ENCODE measurements at regions of chr13 and their contacts with region 1.

Region 1: GRCh38 chr13:99269627-99270241 is 11.6 kb upstream of the GPR18 start:
- DNase-seq: peak; percentile 55
- H3K4me3 ChIP-seq: no peak overlapping the region
- H3K27ac ChIP-seq: no peak overlapping the region
- H3K4me1 ChIP-seq: peaks cover 23% of the 10 kb centered on the region
- CTCF ChIP-seq: peak; percentile 80

Region 2: GRCh38 chr13:98842864-98843481 is 426.8 kb before region 1 on chr13:
- CTCF ChIA-PET with region 1: no interaction called
- POLR2A ChIA-PET with region 1: no interaction called
- intact Hi-C with region 1: loop called (anchors 10 kb)
- DNase-seq: peak; percentile 71
- H3K4me3 ChIP-seq: no peak overlapping the region
- H3K27ac ChIP-seq: no peak overlapping the region
- H3K4me1 ChIP-seq: peaks cover 2% of the 10 kb centered on the region
- CTCF ChIP-seq: peak; percentile 80

Region 3: GRCh38 chr13:99176309-99177276 is 93.1 kb before region 1 on chr13:
- CTCF ChIA-PET with region 1: interaction called, 18 read pairs
- POLR2A ChIA-PET with region 1: interaction called, 4 read pairs
- intact Hi-C with region 1: loop called (anchors 1 kb)
- DNase-seq: peak; percentile 76
- H3K4me3 ChIP-seq: peak overlapping the region; percentile 39
- H3K27ac ChIP-seq: no peak overlapping the region
- H3K4me1 ChIP-seq: peaks cover 30% of the 10 kb centered on the region
- CTCF ChIP-seq: peak; percentile 78

Region 4: DNA sequence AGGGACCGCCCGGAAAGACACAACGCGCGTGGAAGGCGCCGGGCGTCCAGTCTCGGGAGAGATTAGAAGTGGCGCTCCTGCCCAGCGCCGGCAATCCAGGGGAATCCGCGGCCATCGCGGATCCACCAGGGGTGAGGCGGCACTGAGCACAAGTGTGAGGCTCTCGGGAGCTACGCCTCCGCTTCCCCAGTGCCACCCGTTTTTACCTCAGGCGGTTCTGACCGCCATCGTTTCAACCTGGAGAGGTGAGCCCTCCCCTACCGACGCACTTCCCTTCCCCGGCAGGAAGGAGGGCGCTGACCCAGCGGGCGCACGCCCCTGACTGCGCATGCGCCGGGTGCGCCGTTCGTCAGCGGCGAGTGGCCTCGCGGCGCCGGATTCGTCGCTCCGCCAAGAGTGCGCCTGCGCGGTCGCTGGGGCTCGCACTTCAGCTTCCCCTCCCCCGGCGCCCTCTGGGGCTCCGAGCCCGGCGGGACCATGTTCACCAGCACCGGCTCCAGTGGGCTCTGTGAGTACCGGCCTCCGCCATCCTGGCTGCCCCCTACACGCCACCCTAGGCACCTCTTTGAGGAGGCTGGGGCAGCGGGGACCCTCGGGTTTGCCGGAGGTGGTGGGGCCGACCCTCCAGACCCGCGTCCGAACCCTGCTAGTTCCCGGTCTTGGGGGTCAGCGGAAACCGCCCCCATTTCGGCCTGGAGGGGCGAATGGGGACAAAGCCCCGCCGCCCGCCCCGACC is 69.1 kb before region 1 on chr13 and contains the start of gene UBAC2:
- CTCF ChIA-PET with region 1: interaction called, 3 read pairs
- POLR2A ChIA-PET with region 1: interaction called, 6 read pairs
- intact Hi-C with region 1: loop called (anchors 2 kb)
- DNase-seq: peak; percentile 92
- H3K4me3 ChIP-seq: peak within 1 kb of the TSS; percentile 87
- H3K27ac ChIP-seq: peak within 1 kb of the TSS; percentile 82
- H3K4me1 ChIP-seq: peaks cover 50% of the 10 kb centered on the region
- CTCF ChIP-seq: no peak
- total RNA-seq, gene UBAC2: 26.8 and 33.4 TPM in 2 replicates

Region 5: GRCh38 chr13:99312493-99312883 is 42.8 kb after region 1 on chr13:
- CTCF ChIA-PET with region 1: no interaction called
- POLR2A ChIA-PET with region 1: no interaction called
- intact Hi-C with region 1: no loop called
- DNase-seq: no peak
- H3K4me3 ChIP-seq: no peak overlapping the region
- H3K27ac ChIP-seq: no peak overlapping the region
- H3K4me1 ChIP-seq: no peaks in the 10 kb centered on the region
- CTCF ChIP-seq: no peak

Region 6: GRCh38 chr13:99386911-99387788 is 117.4 kb after region 1 on chr13:
- CTCF ChIA-PET with region 1: interaction called, 4 read pairs
- POLR2A ChIA-PET with region 1: interaction called, 3 read pairs
- intact Hi-C with region 1: loop called (anchors 5 kb)
- DNase-seq: peak; percentile 72
- H3K4me3 ChIP-seq: no peak overlapping the region
- H3K27ac ChIP-seq: no peak overlapping the region
- H3K4me1 ChIP-seq: peaks cover 3% of the 10 kb centered on the region
- CTCF ChIP-seq: peak; percentile 88

Region 7: DNA sequence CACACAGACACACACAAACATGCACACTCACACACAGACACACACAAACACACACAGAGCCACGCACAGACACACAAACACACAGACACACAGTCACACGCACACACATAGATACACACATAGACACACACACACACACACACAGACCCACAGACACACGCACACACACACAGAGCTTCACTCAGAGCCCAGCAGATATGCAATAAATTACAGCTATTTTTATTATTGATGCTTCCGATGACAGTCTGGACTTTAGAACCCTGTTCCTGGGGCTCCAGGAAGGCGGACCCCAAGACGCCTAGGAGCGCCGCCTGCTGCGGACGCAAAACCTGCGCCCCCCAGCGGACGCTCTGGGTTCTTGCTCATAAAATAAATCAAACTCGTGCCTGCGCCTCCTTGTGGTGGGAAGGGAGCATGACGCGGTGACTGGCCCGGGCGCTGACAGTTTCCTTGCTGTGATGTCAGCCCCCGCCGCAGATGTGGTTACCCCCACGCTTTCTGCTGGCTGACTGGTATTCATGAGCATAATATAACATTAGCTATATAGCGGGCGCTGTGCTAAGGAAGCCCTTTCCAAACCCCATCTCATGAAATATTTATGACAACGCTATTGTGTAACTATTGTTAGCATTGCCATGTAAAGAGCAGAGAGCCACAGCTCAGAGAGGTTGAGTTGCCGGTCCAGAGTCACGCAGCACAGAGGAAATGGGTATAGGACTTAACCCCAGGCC is 167.1 kb after region 1 on chr13:
- CTCF ChIA-PET with region 1: interaction called, 4 read pairs
- POLR2A ChIA-PET with region 1: interaction called, 4 read pairs
- intact Hi-C with region 1: loop called (anchors 1 kb)
- DNase-seq: peak; percentile 82
- H3K4me3 ChIP-seq: no peak overlapping the region
- H3K27ac ChIP-seq: no peak overlapping the region
- H3K4me1 ChIP-seq: peaks cover 12% of the 10 kb centered on the region
- CTCF ChIP-seq: peak; percentile 97

Region 8: GRCh38 chr13:100035919-100036318 is 766.2 kb after region 1 on chr13:
- CTCF ChIA-PET with region 1: no interaction called
- POLR2A ChIA-PET with region 1: no interaction called
- intact Hi-C with region 1: no loop called
- DNase-seq: no peak
- H3K4me3 ChIP-seq: no peak overlapping the region
- H3K27ac ChIP-seq: no peak overlapping the region
- H3K4me1 ChIP-seq: no peaks in the 10 kb centered on the region
- CTCF ChIP-seq: no peak